ENCODE measurements at regions of chr2 and their contacts with region 1.

Region 1: GRCh38 chr2:59366288-59366687 is 1125.2 kb upstream of the FANCL start:
- DNase-seq: no peak
- ATAC-seq: no peak
- H3K4me3 ChIP-seq: no peak overlapping the region
- H3K27ac ChIP-seq: no peak overlapping the region
- H3K4me1 ChIP-seq: no peaks in the 10 kb centered on the region
- H3K27me3 ChIP-seq: no peaks in the 10 kb centered on the region
- CTCF ChIP-seq: no peak
- POLR2A ChIP-seq: no peak
- RAD21 ChIP-seq: no peak

Region 2: GRCh38 chr2:59383473-59383872 is 17.2 kb after region 1 on chr2:
- CTCF ChIA-PET with region 1: no interaction called
- POLR2A ChIA-PET with region 1: no interaction called
- dilution Hi-C with region 1: no loop called
- in situ Hi-C with region 1: no loop called
- intact Hi-C with region 1: loop called (anchors 1 kb)
- DNase-seq: no peak
- ATAC-seq: no peak
- H3K4me3 ChIP-seq: no peak overlapping the region
- H3K27ac ChIP-seq: no peak overlapping the region
- H3K4me1 ChIP-seq: no peaks in the 10 kb centered on the region
- H3K27me3 ChIP-seq: no peaks in the 10 kb centered on the region
- CTCF ChIP-seq: no peak
- POLR2A ChIP-seq: no peak
- RAD21 ChIP-seq: no peak

Region 3: DNA sequence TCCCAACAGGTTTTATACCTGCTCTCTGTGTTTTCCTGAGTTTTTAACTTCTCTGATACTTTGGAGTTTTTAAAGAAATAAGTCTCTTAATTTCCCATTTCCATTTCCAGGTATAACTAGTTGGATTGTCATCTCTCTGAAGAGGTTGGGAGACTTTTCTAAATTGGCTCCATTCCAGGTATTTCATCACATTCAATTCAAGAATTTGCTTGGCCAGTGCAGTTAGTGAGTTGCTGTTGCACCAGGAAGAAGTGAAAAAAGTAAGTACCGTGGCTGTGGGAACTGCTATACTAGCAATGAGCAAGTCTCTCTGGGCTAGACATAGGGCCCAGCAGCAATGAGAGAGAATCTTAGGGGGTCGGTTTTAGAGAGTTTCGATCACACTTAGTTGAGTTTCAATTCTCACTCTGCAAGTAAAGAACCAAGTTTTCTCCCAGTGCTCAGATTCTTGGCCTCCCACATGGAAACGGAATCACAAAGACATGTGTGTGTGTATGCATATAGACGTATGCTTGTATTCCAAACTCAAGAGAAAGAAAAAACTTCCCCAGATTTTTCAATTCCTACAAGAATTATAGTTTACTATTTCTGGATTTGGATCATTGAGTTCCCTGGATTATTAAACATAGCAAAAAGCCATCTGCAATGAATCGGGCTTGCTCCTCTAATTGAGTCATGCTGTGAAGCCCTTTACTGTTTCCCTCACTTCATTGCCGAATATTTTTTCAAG is 292.8 kb after region 1 on chr2:
- CTCF ChIA-PET with region 1: no interaction called
- POLR2A ChIA-PET with region 1: no interaction called
- dilution Hi-C with region 1: no loop called
- in situ Hi-C with region 1: no loop called
- intact Hi-C with region 1: no loop called
- DNase-seq: no peak
- ATAC-seq: no peak
- H3K4me3 ChIP-seq: no peak overlapping the region
- H3K27ac ChIP-seq: no peak overlapping the region
- H3K4me1 ChIP-seq: no peaks in the 10 kb centered on the region
- H3K27me3 ChIP-seq: no peaks in the 10 kb centered on the region
- CTCF ChIP-seq: no peak
- POLR2A ChIP-seq: no peak
- RAD21 ChIP-seq: no peak

Measured in IMR-90 (cell line).